ENCODE measurements at regions of chr11 and their contacts with region 1.

Region 1: DNA sequence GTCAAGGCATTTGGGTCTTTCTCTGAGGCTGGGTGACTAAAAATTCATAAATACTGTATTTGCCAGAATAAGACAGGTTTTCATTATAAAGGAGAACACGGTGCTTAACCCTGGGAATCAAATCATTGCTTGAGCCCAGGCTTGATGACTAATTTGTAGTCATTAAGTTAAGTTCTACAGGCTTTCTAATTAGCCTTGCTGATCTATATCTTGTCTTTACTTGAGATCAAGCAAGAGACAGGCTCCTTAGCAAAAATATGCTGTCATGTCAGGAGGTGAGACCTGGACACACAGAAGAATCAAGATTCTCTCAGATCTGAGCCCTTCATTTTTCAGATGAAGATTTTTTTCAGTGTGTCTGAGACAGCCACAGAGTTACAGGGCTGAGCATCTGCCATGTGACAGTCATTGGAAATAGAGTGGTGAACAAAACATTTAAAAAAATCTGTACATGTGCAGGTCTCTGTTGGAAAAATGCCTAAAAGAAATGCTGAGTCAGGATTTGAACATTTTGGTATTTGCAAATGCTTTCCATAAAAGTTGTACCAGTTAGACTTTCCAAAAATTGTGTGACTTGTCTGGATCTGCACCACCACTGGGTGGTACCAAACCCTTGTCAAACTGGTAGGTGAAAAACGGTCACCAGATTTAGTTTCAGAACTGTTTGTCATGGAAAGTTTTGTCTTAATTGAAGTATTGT is 14.6 kb downstream of the ACAT1 start:
- DNase-seq: peak; percentile 55
- H3K4me3 Mint-ChIP-seq: no peak overlapping the region
- H3K27ac Mint-ChIP-seq: peak overlapping the region; percentile 68
- H3K4me1 Mint-ChIP-seq: peaks cover 24% of the 10 kb centered on the region
- H3K27me3 Mint-ChIP-seq: no peaks in the 10 kb centered on the region

Region 2: GRCh38 chr11:108121274-108122155 is 14.5 kb before region 1 on chr11 and contains the start of gene ACAT1:
- CTCF ChIA-PET with region 1: interaction called, 5 read pairs
- POLR2A ChIA-PET with region 1: no interaction called
- intact Hi-C with region 1: loop called (anchors 1 kb)
- DNase-seq: peak; percentile 98
- H3K4me3 Mint-ChIP-seq: peak within 1 kb of the TSS; percentile 87
- H3K27ac Mint-ChIP-seq: peak within 1 kb of the TSS; percentile 67
- H3K4me1 Mint-ChIP-seq: peaks cover 38% of the 10 kb centered on the region
- H3K27me3 Mint-ChIP-seq: no peaks in the 10 kb centered on the region
- total RNA-seq, gene ACAT1: 58.3 to 64.9 TPM

Region 3: GRCh38 chr11:108170184-108170583 is 34.2 kb after region 1 on chr11:
- CTCF ChIA-PET with region 1: no interaction called
- POLR2A ChIA-PET with region 1: no interaction called
- intact Hi-C with region 1: loop called (anchors 2 kb)
- DNase-seq: no peak
- H3K4me3 Mint-ChIP-seq: no peak overlapping the region
- H3K27ac Mint-ChIP-seq: no peak overlapping the region
- H3K4me1 Mint-ChIP-seq: peaks cover 43% of the 10 kb centered on the region
- H3K27me3 Mint-ChIP-seq: no peaks in the 10 kb centered on the region

Region 4: DNA sequence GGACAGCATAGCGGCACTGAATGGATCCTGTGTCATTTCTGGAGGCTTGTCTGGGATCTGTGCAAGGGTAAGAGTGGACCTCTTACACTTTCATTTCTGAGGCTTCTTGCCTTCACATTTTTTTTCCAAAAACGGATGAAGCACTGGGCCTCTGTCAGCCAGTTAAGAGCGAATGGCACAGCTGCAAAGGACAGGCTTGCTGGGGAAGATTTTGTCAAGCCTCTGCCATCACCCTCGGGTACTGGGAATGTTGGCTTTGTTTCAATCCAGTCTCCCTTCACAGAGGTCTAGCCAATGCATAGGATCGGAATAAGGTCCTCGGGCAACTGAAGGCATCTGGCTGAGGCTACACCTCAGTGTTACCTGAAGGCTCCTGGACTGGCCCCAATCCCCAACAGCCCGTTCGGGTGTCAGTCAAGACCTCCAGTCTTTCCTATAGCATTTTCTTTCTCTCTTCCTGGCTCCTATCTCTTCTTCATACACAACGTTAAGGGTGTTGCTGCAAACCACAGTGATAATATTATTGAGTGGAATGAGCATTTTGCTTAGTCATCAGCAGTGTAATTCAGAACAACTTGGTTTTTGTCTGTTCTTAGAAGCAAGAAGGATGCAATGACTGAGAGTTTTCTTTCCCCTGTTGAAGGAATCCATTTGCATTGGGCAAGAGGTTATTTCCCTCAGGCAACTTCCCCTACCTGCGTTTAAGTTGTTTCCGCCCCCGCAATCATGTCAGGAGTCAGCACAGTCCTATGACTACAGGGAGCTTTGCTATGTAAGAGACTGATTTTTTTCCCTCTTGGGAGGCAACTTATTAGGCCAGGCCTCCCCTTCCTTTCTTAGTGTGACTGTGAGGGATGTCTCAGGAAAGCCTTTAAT is 63.7 kb after region 1 on chr11:
- CTCF ChIA-PET with region 1: no interaction called
- POLR2A ChIA-PET with region 1: no interaction called
- intact Hi-C with region 1: loop called (anchors 1 kb)
- DNase-seq: peak; percentile 91
- H3K4me3 Mint-ChIP-seq: no peak overlapping the region
- H3K27ac Mint-ChIP-seq: peak overlapping the region; percentile 76
- H3K4me1 Mint-ChIP-seq: peaks cover 89% of the 10 kb centered on the region
- H3K27me3 Mint-ChIP-seq: no peaks in the 10 kb centered on the region

Region 5: DNA sequence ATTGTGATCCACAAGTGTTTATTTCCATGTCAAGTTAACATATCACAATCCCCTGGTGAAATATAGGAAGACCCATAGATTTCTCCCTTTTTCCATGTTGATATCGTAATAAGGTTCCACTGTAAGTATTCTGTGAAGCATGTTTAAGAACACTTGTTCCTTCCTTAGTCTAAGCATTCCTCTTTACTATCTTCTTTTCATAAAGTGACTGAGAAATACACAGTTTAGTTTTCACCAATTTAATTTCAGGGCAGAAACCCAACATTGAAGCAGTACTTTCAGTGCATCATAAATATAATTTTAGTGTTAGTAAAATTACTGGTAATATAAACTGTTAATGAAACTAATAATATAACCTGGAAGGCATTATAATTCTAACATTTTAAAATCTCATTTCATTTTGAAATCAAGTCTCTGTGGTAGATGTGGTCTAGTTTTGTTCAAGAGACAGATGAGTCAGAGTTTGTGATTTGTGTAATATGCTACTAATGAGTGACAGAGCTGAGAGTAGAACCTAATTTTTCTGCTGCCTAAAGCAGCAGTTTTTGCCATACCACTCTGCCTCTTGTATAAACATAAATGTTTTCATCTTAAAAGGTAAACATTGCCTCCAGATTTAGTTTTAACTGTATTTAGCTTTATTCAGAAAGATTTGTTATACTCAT is 166.3 kb after region 1 on chr11:
- CTCF ChIA-PET with region 1: no interaction called
- POLR2A ChIA-PET with region 1: no interaction called
- intact Hi-C with region 1: loop called (anchors 2 kb)
- DNase-seq: no peak
- H3K4me3 Mint-ChIP-seq: no peak overlapping the region
- H3K27ac Mint-ChIP-seq: no peak overlapping the region
- H3K4me1 Mint-ChIP-seq: peaks cover 20% of the 10 kb centered on the region
- H3K27me3 Mint-ChIP-seq: no peaks in the 10 kb centered on the region

Region 6: DNA sequence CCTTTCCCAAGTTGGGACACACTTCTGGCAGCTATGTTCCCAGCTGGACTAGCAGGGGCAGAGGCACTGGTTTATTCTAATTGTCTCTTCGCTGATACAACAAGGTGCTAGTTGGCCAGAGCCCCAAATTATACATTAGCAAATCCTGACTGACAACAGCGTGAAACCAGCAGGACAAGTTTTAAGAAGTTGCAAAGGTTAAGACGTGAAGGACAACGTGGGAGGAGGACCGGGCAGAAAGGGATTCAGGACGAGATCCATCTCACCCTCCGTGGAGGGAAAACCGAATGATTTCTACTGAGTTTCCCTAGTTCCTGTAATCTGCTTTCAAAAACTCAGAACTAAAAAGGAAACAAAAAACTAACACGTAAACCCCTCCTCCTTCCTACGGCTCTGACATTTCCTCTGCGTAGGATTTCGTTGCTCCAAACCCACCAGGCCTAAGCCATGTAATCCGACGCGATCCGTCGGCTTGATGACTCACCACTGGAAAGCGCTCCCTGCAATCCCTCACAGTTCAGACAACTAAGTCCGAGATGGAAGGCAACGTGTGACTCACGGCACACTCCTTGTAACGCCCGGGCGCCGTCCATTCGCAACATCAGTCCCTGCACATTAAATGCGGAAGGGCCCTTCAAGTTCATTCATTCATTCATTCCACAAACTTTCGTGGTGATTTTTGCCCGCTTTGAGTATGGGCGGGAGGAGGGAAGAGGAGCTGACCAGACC is 361.5 kb after region 1 on chr11:
- CTCF ChIA-PET with region 1: no interaction called
- POLR2A ChIA-PET with region 1: no interaction called
- intact Hi-C with region 1: loop called (anchors 5 kb)
- DNase-seq: peak; percentile 87
- H3K4me3 Mint-ChIP-seq: peak overlapping the region; percentile 95
- H3K27ac Mint-ChIP-seq: peak overlapping the region; percentile 99
- H3K4me1 Mint-ChIP-seq: peaks cover 16% of the 10 kb centered on the region
- H3K27me3 Mint-ChIP-seq: no peaks in the 10 kb centered on the region

Region 7: GRCh38 chr11:108647701-108648527 is 511.9 kb after region 1 on chr11:
- CTCF ChIA-PET with region 1: no interaction called
- POLR2A ChIA-PET with region 1: no interaction called
- intact Hi-C with region 1: loop called (anchors 1 kb)
- DNase-seq: peak; percentile 76
- H3K4me3 Mint-ChIP-seq: no peak overlapping the region
- H3K27ac Mint-ChIP-seq: no peak overlapping the region
- H3K4me1 Mint-ChIP-seq: no peaks in the 10 kb centered on the region
- H3K27me3 Mint-ChIP-seq: no peaks in the 10 kb centered on the region

Measured in activated CD4-positive, alpha-beta memory T cell treated with anti-CD3 and anti-CD28 coated beads for 36 hours (primary cell).